AG04449 (cell line): ENCODE measurements at regions of chr6 and their contacts with region 1.

Region 1: GRCh38 chr6:56902641-56903464 is 52.1 kb upstream of the BEND6 start:
- DNase-seq: peak; percentile 16
- H3K4me3 ChIP-seq: no peak overlapping the region
- CTCF ChIP-seq: peak; percentile 47

Region 2: GRCh38 chr6:56555438-56555872 is 347.4 kb before region 1 on chr6:
- CTCF ChIA-PET with region 1: no interaction called
- POLR2A ChIA-PET with region 1: no interaction called
- DNase-seq: no peak
- H3K4me3 ChIP-seq: no peak overlapping the region
- CTCF ChIP-seq: no peak

Region 3: DNA sequence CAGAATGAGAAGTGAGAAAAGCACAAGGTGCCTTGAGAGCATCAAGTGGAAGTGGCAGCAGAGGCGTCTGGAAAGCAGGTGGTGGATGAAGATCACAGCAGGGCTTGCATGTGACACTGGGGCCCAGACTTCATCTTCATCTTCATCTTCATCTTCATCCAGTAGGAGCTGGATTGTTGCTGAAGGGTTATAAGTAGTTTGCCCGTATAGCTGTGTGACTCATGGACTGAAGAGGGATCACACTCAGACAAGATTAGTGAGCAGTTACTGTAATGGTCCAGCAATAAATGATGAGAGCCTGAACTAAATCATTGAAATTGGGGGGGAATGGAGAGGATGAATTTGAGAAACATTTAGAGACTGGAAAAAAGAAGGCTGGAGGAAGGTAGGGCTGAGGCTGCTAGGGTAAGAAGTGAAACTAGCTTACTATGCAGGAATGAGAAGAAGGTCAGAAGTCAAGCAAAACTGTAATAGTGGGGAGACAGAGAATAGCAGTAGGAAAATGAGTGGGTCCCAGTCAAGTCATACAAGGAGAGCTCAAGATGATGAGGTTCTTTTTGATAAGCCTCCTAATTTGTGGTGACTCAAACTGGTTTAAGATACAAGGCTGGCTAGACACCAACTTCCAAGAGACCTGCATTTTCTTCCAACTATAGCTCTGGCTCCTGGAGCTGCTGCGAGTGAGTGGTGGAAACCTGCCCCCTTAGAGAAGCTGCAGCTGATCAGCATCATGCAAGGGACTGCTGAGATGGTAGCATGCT is 40.3 kb before region 1 on chr6:
- CTCF ChIA-PET with region 1: interaction called, 11 read pairs
- POLR2A ChIA-PET with region 1: no interaction called
- DNase-seq: no peak
- H3K4me3 ChIP-seq: no peak overlapping the region
- CTCF ChIP-seq: no peak

Region 4: GRCh38 chr6:56890683-56891429 is 12.0 kb before region 1 on chr6:
- CTCF ChIA-PET with region 1: interaction called, 80 read pairs
- POLR2A ChIA-PET with region 1: interaction called, 4 read pairs
- DNase-seq: peak; percentile 84
- H3K4me3 ChIP-seq: no peak overlapping the region
- CTCF ChIP-seq: no peak

Region 5: DNA sequence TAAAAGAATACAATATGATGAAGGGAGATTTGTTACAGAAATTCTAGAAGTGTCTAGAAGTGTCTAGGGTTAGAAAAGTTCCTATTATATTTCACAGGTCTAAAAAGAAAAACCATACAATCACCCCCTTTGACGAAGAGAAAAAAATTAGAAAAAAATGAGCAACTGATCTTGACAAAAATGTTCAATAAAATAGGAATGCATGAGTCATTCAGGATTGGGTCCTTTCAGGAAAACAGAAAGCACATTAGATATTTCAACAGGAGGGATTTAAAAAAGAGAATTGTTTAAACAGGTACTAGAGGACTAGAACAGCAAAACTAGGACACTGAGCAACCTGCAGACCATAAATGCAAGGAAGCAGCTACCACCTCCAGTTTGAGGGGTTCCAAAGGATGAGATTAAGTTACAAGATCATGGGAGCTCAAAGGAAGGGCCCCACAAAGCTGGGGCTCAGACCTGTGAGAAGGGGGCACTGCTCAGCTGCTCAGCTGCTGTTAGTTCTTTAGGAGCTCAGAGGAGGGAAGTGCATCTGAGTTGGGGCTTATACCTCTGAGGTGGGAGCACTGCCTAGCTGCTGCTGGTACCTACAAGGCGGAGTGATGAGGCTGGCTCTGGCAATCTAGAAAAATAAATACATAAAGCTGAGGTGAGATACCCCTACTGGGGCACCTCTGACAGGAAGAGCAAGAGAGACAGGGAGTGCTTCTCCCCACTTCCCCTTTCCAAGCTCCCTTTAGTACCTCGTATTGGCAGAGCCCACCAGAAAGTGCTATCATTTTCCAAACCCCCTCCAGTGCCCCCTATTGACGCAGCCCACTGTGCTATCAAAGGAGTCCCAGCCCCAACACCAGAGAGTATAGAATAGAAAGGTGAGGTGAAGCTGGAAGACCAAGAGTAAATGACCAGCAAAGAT is 24.9 kb after region 1 on chr6:
- CTCF ChIA-PET with region 1: interaction called, 26 read pairs
- POLR2A ChIA-PET with region 1: no interaction called
- DNase-seq: no peak
- H3K4me3 ChIP-seq: no peak overlapping the region
- CTCF ChIP-seq: no peak

Region 6: DNA sequence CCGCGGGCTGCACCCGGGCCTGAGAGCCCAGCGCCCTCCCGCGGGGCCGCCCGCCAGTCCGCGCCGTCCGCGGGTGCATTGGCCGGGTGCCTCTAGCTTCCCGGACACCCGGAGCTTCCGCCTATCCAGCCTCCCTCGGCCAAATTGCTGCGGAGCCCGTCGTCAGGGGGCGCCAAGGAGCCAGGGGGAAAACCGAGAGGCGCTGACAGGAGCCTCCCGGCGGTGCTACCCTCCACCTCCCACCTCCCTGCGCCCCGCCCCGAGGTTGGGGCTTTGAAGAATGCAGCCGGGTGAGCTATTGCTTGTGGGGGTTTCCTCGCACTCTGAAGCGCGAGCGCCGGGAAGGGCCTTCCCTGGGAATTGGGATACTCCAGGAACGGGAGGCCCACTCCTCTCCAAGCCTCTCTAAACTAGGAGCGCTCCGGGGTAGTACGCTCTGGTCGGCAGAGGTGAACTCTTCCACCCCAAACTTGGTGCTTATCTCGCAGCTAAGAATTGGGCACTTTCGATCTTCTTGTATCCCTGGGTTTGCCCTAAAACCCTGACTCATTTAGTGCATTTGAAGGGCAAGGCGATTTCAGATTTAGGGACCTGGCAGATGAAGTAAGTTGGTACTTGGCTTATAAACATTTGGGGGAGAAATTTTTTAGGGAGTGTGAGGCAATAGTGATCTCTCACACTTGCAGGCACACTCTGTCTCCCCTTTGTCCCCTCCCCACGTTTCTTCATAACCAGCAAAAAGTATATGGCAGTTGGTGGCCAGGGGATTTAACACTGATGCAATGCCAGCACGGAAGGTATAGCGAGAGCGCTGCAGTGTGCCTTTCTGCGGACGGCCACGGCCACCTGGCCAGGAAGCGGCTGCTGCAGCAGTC is 52.6 kb after region 1 on chr6:
- CTCF ChIA-PET with region 1: interaction called, 123 read pairs
- POLR2A ChIA-PET with region 1: interaction called, 5 read pairs
- DNase-seq: no peak
- H3K4me3 ChIP-seq: peak overlapping the region; percentile 88
- CTCF ChIP-seq: peak; percentile 95

Region 7: GRCh38 chr6:57002197-57002596 is 99.3 kb after region 1 on chr6:
- CTCF ChIA-PET with region 1: no interaction called
- POLR2A ChIA-PET with region 1: no interaction called
- DNase-seq: no peak
- H3K4me3 ChIP-seq: no peak overlapping the region
- CTCF ChIP-seq: no peak

Region 8: GRCh38 chr6:57048577-57048976 is 145.7 kb after region 1 on chr6:
- CTCF ChIA-PET with region 1: interaction called, 11 read pairs
- POLR2A ChIA-PET with region 1: no interaction called
- DNase-seq: no peak
- H3K4me3 ChIP-seq: peak overlapping the region; percentile 3
- CTCF ChIP-seq: no peak